Naive thymus-derived CD4-positive, alpha-beta T cell (primary cell): ENCODE measurements at regions of chrX and their contacts with region 1.

Region 1: DNA sequence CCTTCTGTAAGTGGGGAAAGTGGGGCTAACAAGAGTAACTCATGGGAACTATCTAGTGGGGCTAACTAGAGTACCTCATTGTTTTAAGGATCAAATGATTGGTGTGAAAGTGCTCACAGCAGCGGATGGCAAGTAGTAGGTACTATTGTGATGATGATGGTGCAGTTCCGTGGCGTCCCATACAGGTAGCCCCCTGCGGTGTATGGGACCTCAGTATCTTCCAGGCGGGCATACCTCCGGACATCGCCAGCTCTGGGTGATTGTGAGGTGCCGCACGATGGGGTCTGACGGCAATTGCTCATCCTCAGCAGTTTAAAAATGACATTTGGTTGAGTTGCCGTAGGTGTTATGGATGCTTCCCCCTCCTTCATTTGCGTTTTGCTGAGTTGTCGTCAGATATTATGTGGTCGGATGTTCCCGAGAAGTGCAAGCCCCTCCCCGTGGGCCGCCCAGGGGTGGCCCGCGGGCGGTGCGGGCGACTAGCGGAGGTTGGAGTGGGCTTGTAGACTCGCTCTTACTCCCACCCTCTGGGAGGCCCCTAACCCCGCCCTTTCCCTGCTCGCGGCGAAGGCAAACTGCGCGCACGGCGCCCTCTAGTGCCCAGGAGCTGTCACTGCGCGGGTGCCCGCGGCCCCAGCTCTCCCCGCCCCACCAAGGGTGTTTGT is 18.3 kb upstream of the GPR101 start:
- DNase-seq: peak; percentile 65 to 81 (median 77)
- ATAC-seq: peak; percentile 99
- H3K4me3 ChIP-seq: peak overlapping the region; percentile 68
- H3K4me3 Mint-ChIP-seq: peak overlapping the region; percentile 85 to 93 (median 91)
- H3K27ac ChIP-seq: no peak overlapping the region
- H3K27ac Mint-ChIP-seq: peak overlapping the region in 5 of 9 donors; percentile 21 to 63 (median 45)
- H3K4me1 ChIP-seq: no peaks in the 10 kb centered on the region
- H3K4me1 Mint-ChIP-seq: peaks cover 0 to 15% (median 4%) of the 10 kb centered on the region in 7 donors
- H3K27me3 ChIP-seq: no peaks in the 10 kb centered on the region
- H3K27me3 Mint-ChIP-seq: peaks cover 10 to 50% (median 13%) of the 10 kb centered on the region in 5 donors

Region 2: DNA sequence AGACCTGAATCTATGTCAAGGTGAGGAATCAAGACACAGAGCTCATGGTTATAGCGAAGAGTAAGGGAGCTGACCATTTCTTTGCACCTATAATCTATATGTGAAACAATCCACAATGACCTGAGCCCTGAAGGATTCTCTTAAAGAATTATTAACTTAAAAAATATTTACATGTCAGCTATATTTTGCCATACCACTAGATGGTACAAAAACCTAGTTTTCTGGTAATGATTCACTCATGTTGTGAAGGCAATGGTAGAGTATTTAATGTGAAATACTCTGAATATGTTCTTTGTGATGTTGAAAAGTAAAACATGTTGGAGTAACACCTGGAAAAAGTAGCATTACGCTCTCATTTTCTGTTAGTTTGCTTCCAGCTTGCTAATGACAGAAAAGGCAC is 480.1 kb before region 1 on chrX:
- CTCF ChIA-PET with region 1: no interaction called
- POLR2A ChIA-PET with region 1: no interaction called
- intact Hi-C with region 1: loop called in 1 of 2 experiments (anchors 1 kb)
- DNase-seq: peak in 3 of 9 donors; percentile 1 to 29 (median 6)
- ATAC-seq: no peak
- H3K4me3 ChIP-seq: no peak overlapping the region
- H3K4me3 Mint-ChIP-seq: peak overlapping the region in 3 of 10 donors; percentile 12 to 25 (median 24)
- H3K27ac ChIP-seq: no peak overlapping the region
- H3K27ac Mint-ChIP-seq: peak overlapping the region in 2 of 9 donors; percentile 25 to 59
- H3K4me1 ChIP-seq: peaks cover 4 to 8% of the 10 kb centered on the region in 2 donors
- H3K4me1 Mint-ChIP-seq: peaks cover 0 to 11% (median 9%) of the 10 kb centered on the region in 7 donors
- H3K27me3 ChIP-seq: no peaks in the 10 kb centered on the region
- H3K27me3 Mint-ChIP-seq: no peaks in the 10 kb centered on the region

Region 3: GRCh38 chrX:136754651-136755050 is 297.5 kb before region 1 on chrX:
- CTCF ChIA-PET with region 1: no interaction called
- POLR2A ChIA-PET with region 1: no interaction called
- intact Hi-C with region 1: no loop called
- DNase-seq: peak in 6 of 9 donors; percentile 19 to 46 (median 36)
- ATAC-seq: peak; percentile 69
- H3K4me3 ChIP-seq: no peak overlapping the region
- H3K4me3 Mint-ChIP-seq: peak overlapping the region in 3 of 10 donors; percentile 18 to 56 (median 39)
- H3K27ac ChIP-seq: no peak overlapping the region
- H3K27ac Mint-ChIP-seq: peak overlapping the region in 5 of 9 donors; percentile 11 to 64 (median 48)
- H3K4me1 ChIP-seq: peaks cover 6 to 33% of the 10 kb centered on the region in 2 donors
- H3K4me1 Mint-ChIP-seq: peaks cover 21 to 88% (median 77%) of the 10 kb centered on the region in 7 donors
- H3K27me3 ChIP-seq: no peaks in the 10 kb centered on the region
- H3K27me3 Mint-ChIP-seq: no peaks in the 10 kb centered on the region

Region 4: GRCh38 chrX:136953867-136954787 is 98.0 kb before region 1 on chrX:
- CTCF ChIA-PET with region 1: interaction called, 4 read pairs
- POLR2A ChIA-PET with region 1: no interaction called
- intact Hi-C with region 1: loop called (anchors 1 kb)
- DNase-seq: peak; percentile 7 to 51 (median 38)
- ATAC-seq: peak; percentile 69
- H3K4me3 ChIP-seq: no peak overlapping the region
- H3K4me3 Mint-ChIP-seq: no peak overlapping the region
- H3K27ac ChIP-seq: no peak overlapping the region
- H3K27ac Mint-ChIP-seq: no peak overlapping the region
- H3K4me1 ChIP-seq: no peaks in the 10 kb centered on the region
- H3K4me1 Mint-ChIP-seq: no peaks in the 10 kb centered on the region
- H3K27me3 ChIP-seq: no peaks in the 10 kb centered on the region
- H3K27me3 Mint-ChIP-seq: no peaks in the 10 kb centered on the region

Region 5: DNA sequence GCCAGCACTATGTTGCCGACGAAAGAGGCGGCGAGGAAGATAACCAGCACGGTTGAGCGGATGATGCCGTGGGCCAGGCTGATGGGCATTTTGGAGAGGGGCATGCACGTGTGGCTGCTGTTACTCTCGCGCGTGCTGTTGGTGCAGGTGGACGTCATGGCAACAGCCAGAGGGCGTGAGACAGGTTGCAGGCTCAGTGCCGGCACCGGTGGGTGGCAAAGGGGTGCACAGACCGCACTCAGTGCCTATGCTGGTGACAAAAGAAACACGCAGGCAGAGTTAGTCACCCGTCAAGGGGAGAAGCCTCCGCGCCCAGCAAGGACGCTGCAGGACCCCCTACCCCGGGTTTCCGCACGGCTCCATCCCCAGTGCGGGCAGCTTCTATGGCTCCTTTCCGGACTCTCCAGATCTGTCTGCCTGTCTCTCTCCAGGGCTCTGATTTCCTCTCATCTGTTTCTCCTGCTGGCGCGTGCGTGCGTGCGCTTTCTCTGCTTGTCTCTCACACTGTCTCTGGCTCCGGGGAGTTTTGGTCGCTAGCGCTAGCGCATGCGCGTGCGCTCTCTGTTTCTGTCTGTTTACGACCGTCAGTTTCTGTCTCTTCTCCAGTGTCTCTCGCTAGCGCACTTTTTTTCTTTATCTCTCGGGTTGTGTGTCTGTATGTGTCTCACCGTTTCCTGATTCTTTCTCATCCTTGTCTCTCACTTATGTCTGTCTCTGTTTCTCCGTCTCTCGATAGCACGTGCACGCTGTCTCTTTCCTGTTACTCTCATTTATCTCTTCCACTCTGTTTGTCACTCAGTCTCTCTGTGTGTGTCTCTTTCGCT is 20.4 kb before region 1 on chrX:
- CTCF ChIA-PET with region 1: interaction called, 4 read pairs
- POLR2A ChIA-PET with region 1: interaction called, 3 read pairs
- intact Hi-C with region 1: loop called (anchors 1 kb)
- DNase-seq: peak in 8 of 9 donors; percentile 11 to 51 (median 32)
- ATAC-seq: peak; percentile 72
- H3K4me3 ChIP-seq: peak overlapping the region; percentile 64
- H3K4me3 Mint-ChIP-seq: peak overlapping the region in 1 of 10 donors; percentile 70
- H3K27ac ChIP-seq: no peak overlapping the region
- H3K27ac Mint-ChIP-seq: peak overlapping the region in 1 of 9 donors; percentile 32
- H3K4me1 ChIP-seq: peaks cover 10 to 14% of the 10 kb centered on the region in 2 donors
- H3K4me1 Mint-ChIP-seq: peaks cover 4 to 13% (median 11%) of the 10 kb centered on the region in 7 donors
- H3K27me3 ChIP-seq: peaks cover 0 to 6% of the 10 kb centered on the region in 2 donors
- H3K27me3 Mint-ChIP-seq: peaks cover 15 to 63% (median 36%) of the 10 kb centered on the region in 5 donors

Region 6: GRCh38 chrX:137194164-137194563 is 142.1 kb after region 1 on chrX:
- CTCF ChIA-PET with region 1: no interaction called
- POLR2A ChIA-PET with region 1: no interaction called
- intact Hi-C with region 1: loop called in 1 of 2 experiments (anchors 10 kb)
- DNase-seq: peak in 5 of 9 donors; percentile 2 to 22 (median 11)
- ATAC-seq: no peak
- H3K4me3 ChIP-seq: no peak overlapping the region
- H3K4me3 Mint-ChIP-seq: no peak overlapping the region
- H3K27ac ChIP-seq: no peak overlapping the region
- H3K27ac Mint-ChIP-seq: no peak overlapping the region
- H3K4me1 ChIP-seq: no peaks in the 10 kb centered on the region
- H3K4me1 Mint-ChIP-seq: peaks cover 0 to 11% (median 6%) of the 10 kb centered on the region in 7 donors
- H3K27me3 ChIP-seq: no peaks in the 10 kb centered on the region
- H3K27me3 Mint-ChIP-seq: peaks cover 0 to 7% (median 0%) of the 10 kb centered on the region in 5 donors